Natural killer cell (primary cell): ENCODE measurements at regions of chr15 and their contacts with region 1.

Region 1: DNA sequence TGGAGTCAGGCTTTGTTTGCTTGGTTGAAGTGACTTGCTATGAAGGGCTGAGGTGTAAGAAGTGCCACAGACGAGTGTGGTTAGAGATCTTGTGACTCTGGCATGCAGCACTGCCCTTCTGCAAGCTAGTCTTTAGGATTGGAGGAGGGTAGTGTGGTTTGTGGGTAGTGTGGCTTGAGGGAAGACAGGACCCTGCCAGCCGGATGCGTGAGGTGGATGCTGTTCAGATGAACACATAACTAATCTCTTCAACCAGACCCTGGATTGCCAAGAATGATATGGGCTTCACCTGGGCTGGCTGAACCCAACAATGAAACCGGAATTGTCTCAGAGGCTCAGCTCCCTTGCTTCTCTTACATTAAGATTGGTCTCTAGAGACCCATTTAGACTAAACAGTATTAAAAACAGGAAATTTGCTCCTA is 32.7 kb downstream of the STARD9 start:
- DNase-seq: peak; percentile 61 to 64
- ATAC-seq: peak; percentile 58 to 83 (median 77)
- H3K4me3 ChIP-seq: no peak overlapping the region
- H3K4me3 Mint-ChIP-seq: peak overlapping the region; percentile 84
- H3K27ac ChIP-seq: peak overlapping the region; percentile 42
- H3K27ac Mint-ChIP-seq: peak overlapping the region; percentile 76 to 86
- H3K4me1 ChIP-seq: peaks cover 43% of the 10 kb centered on the region
- H3K4me1 Mint-ChIP-seq: peaks cover 46 to 50% of the 10 kb centered on the region in 2 donors
- H3K27me3 ChIP-seq: no peaks in the 10 kb centered on the region
- H3K27me3 Mint-ChIP-seq: no peaks in the 10 kb centered on the region
- CTCF ChIP-seq: no peak

Region 2: GRCh38 chr15:42575188-42576039 is 32.7 kb before region 1 on chr15 and contains the start of gene STARD9:
- intact Hi-C with region 1: loop called (anchors 1 kb)
- DNase-seq: peak; percentile 94 to 96
- ATAC-seq: peak; percentile 89 to 97 (median 91)
- H3K4me3 ChIP-seq: peak within 1 kb of the TSS; percentile 79
- H3K4me3 Mint-ChIP-seq: peak within 1 kb of the TSS; percentile 93
- H3K27ac ChIP-seq: peak within 1 kb of the TSS; percentile 19
- H3K27ac Mint-ChIP-seq: peak within 1 kb of the TSS; percentile 64 to 83
- H3K4me1 ChIP-seq: peaks cover 24% of the 10 kb centered on the region
- H3K4me1 Mint-ChIP-seq: peaks cover 21 to 36% of the 10 kb centered on the region in 2 donors
- H3K27me3 ChIP-seq: no peaks in the 10 kb centered on the region
- H3K27me3 Mint-ChIP-seq: no peaks in the 10 kb centered on the region
- CTCF ChIP-seq: no peak
- total RNA-seq, gene STARD9: 20.0 to 22.5 (median 20.1) TPM

Region 3: DNA sequence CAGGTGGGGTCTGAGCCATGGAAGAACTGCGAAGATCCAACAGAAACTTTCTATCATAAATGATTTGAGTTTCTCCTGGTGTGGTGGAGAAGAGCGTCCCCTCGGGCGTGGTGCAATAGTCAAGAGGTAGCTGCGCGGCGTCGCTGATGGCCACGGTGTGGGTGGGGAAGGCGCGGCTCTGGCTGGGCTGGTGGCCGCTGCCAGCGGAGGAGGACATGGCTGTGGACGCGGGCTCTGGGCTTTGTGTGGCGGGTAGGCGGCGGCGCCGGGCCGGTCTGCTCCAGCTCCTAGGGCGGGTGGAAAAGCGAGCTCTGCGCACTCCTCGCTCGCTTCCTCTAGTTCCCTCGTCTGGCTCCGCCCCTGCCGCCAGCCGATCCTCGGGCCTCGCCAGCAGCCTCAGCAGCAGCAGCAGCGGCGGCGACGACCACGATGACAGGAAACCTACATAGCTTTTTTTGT is 26.8 kb before region 1 on chr15:
- intact Hi-C with region 1: loop called (anchors 2 kb)
- DNase-seq: peak; percentile 66 to 88
- ATAC-seq: peak; percentile 97 to 98 (median 97)
- H3K4me3 ChIP-seq: peak overlapping the region; percentile 45
- H3K4me3 Mint-ChIP-seq: peak overlapping the region; percentile 87
- H3K27ac ChIP-seq: peak overlapping the region; percentile 68
- H3K27ac Mint-ChIP-seq: peak overlapping the region; percentile 65 to 86
- H3K4me1 ChIP-seq: peaks cover 24% of the 10 kb centered on the region
- H3K4me1 Mint-ChIP-seq: peaks cover 38 to 41% of the 10 kb centered on the region in 2 donors
- H3K27me3 ChIP-seq: no peaks in the 10 kb centered on the region
- H3K27me3 Mint-ChIP-seq: no peaks in the 10 kb centered on the region
- CTCF ChIP-seq: no peak

Region 4: DNA sequence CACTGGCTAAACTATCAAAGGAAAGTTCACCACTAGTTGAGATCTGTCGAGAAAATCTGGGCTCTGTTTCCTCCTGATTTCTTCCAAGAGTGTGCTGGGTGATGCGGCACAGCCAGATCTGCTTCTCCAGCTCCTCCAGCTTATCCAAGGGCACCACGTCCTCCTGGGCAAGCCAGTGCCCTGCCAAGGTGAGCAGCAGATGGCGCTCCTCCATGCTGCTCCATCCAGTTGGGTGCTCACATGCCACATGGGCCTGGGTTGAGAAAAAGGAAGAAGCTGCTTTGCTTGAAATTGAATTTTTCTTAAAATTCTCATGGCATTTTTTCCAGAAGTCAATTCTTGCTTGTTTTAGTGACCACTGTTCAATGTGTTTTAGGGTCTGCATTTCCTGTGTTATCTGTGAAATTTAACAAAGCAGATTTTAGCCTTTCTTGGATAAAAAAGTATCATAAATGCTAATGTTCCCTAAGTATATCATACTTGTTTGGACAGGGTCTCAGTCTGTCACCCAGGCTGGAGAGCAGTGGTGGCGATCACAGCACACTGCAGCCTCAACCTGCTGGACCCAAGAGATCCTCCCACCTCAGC is 1976.1 kb after region 1 on chr15:
- intact Hi-C with region 1: no loop called
- DNase-seq: peak; percentile 24 to 75
- ATAC-seq: peak; percentile 70 to 74 (median 72)
- H3K4me3 ChIP-seq: no peak overlapping the region
- H3K4me3 Mint-ChIP-seq: no peak overlapping the region
- H3K27ac ChIP-seq: no peak overlapping the region
- H3K27ac Mint-ChIP-seq: peak overlapping the region; percentile 9 to 12
- H3K4me1 ChIP-seq: peaks cover 1% of the 10 kb centered on the region
- H3K4me1 Mint-ChIP-seq: peaks cover 5 to 8% of the 10 kb centered on the region in 2 donors
- H3K27me3 ChIP-seq: no peaks in the 10 kb centered on the region
- H3K27me3 Mint-ChIP-seq: no peaks in the 10 kb centered on the region
- CTCF ChIP-seq: peak; percentile 22